GM18951 (cell line): ENCODE measurements at regions of chr16 and their contacts with region 1.

Region 1: GRCh38 chr16:11345040-11345862 is at the start of gene RMI2:
- POLR2A ChIP-seq: peak; percentile 63

Region 2: GRCh38 chr16:11263737-11264136 is 81.5 kb before region 1 on chr16:
- in situ Hi-C with region 1: loop called (anchors 5 kb)
- POLR2A ChIP-seq: no peak